ENCODE measurements at regions of chr2 and their contacts with region 1.

Region 1: GRCh38 chr2:19901442-19902215 is at the start of gene TTC32:
- DNase-seq: peak; percentile 89
- H3K4me3 Mint-ChIP-seq: peak within 1 kb of the TSS; percentile 91
- H3K27ac Mint-ChIP-seq: peak within 1 kb of the TSS; percentile 94
- H3K4me1 Mint-ChIP-seq: peaks cover 48% of the 10 kb centered on the region
- H3K27me3 Mint-ChIP-seq: peaks cover 9% of the 10 kb centered on the region
- total RNA-seq, gene TTC32: 14.0 and 15.7 TPM in 2 replicates

Region 2: GRCh38 chr2:19746611-19747309 is 154.9 kb before region 1 on chr2:
- intact Hi-C with region 1: no loop called
- DNase-seq: no peak
- H3K4me3 Mint-ChIP-seq: no peak overlapping the region
- H3K27ac Mint-ChIP-seq: no peak overlapping the region
- H3K4me1 Mint-ChIP-seq: no peaks in the 10 kb centered on the region
- H3K27me3 Mint-ChIP-seq: no peaks in the 10 kb centered on the region

Region 3: DNA sequence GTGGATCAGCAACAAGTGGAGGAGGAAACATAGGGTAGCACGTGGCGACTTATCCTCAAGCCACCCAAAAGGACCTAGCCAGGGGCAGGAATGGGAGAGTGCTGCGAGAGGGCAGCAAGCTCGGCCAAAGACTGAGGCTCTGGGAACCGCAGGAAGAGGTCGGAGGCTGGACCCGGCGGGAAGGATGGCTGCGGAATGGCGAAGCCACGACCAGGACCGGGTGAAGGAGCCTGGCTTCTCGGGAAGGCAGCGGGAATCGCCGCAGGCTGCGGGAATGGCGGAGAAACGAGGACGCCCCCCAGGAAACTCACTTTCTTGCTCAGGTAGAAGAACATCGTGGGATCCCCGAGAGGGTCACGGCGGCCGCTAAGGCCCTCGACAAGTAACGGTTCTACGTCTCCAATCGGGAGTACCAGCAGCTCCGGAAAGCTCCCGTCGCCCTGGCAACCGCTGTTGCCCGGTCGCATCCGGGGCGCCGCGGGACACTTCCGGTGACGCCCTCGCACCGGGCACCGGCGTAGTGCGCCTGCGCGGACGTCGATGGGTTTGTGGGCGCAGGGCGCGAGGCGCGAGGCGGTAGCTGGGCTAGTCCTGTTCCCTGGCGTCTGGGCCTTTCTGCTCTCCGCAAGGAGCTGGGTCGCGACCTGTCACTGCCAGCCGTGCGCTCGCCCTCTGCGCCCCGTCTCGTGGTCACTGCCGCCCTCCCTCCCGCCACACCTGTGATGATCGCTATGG is 88.2 kb after region 1 on chr2 and contains the start of gene WDR35:
- intact Hi-C with region 1: loop called (anchors 1 kb)
- DNase-seq: peak; percentile 92
- H3K4me3 Mint-ChIP-seq: peak within 1 kb of the TSS; percentile 90
- H3K27ac Mint-ChIP-seq: peak within 1 kb of the TSS; percentile 69
- H3K4me1 Mint-ChIP-seq: peaks cover 19% of the 10 kb centered on the region
- H3K27me3 Mint-ChIP-seq: peaks cover 30% of the 10 kb centered on the region
- total RNA-seq, gene WDR35: 7.7 and 7.8 TPM in 2 replicates

Measured in activated T-helper 1 cell treated with anti-CD3 and anti-CD28 coated beads, Interleukin-12 subunit alpha, Interleukin-12 subunit beta, Interleukin-2, Interleukin-4 antibody, amounts not matched to agents 30 ng/mL and 10 ng/mL and 1 ng/mL, durations not matched to agents 14 hours and 24 hours and 36 hours (primary cell).